Activated CD4-positive, alpha-beta T cell treated with anti-CD3 and anti-CD28 coated beads, Interleukin-2, amount 10 ng/mL, durations not matched to agents 7 days and 5 days (primary cell): ENCODE measurements at regions of chr14 and their contacts with region 1.

Region 1: DNA sequence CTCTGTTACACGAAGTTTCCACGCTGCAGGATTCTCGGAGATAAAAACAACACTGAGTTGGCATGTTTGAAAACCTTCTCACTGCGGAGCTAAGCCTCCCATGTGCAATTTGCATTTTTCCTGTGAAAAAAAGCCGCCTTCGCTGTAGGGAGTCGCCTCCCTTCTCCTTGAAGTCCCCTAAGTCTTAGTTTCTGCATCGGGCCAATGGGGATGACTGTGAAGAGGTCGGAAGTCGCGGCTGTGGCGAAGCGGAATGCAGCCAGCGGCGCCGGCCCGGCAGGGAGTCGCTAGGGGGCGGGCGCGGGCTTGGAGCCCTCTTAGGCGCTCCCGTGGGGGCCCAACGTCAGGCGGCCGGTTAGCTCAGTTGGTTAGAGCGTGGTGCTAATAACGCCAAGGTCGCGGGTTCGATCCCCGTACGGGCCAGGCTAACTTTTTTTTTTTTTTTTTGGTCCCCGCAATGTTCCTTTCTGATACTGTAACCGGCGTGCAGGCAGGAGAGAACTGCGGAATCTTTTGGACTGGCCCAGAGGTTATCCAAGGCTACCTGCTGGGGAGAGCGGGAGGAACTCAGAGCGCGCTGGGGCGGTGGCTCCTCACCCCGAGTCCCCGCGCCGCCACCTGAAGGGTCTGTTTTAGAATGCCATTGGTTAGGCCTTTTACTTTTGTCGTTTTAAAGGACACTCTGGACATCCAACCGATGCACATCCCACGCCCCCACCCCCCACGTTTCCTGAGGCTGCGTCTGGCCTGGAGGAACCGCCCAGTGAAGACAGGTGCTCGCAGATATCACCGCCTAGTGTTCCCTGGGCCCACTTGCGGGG is 2.6 kb upstream of the ZNF839 start:
- DNase-seq: peak; percentile 92
- H3K4me3 Mint-ChIP-seq: peak overlapping the region; percentile 84
- H3K27ac Mint-ChIP-seq: peak overlapping the region; percentile 91
- H3K4me1 Mint-ChIP-seq: peaks cover 70% of the 10 kb centered on the region
- H3K27me3 Mint-ChIP-seq: no peaks in the 10 kb centered on the region

Region 2: GRCh38 chr14:102304611-102305509 is 12.1 kb before region 1 on chr14 and contains the start of gene MOK:
- CTCF ChIA-PET with region 1: interaction called, 34 read pairs
- POLR2A ChIA-PET with region 1: no interaction called
- DNase-seq: peak; percentile 97
- H3K4me3 Mint-ChIP-seq: peak within 1 kb of the TSS; percentile 96
- H3K27ac Mint-ChIP-seq: peak within 1 kb of the TSS; percentile 87
- H3K4me1 Mint-ChIP-seq: peaks cover 17% of the 10 kb centered on the region
- H3K27me3 Mint-ChIP-seq: peaks cover 12% of the 10 kb centered on the region
- total RNA-seq, gene MOK: 0.96 to 1.4 TPM